ENCODE measurements at regions of chr5 and their contacts with region 1.

Region 1: GRCh38 chr5:159133041-159133741 is 33.5 kb upstream of the EBF1 start:
- DNase-seq: no peak
- ATAC-seq: peak; percentile 85
- H3K4me3 ChIP-seq: peak overlapping the region; percentile 29 to 79
- H3K27ac ChIP-seq: peak overlapping the region; percentile 3 to 74
- H3K4me1 ChIP-seq: no peaks in the 10 kb centered on the region
- H3K27me3 ChIP-seq: no peaks in the 10 kb centered on the region

Region 2: DNA sequence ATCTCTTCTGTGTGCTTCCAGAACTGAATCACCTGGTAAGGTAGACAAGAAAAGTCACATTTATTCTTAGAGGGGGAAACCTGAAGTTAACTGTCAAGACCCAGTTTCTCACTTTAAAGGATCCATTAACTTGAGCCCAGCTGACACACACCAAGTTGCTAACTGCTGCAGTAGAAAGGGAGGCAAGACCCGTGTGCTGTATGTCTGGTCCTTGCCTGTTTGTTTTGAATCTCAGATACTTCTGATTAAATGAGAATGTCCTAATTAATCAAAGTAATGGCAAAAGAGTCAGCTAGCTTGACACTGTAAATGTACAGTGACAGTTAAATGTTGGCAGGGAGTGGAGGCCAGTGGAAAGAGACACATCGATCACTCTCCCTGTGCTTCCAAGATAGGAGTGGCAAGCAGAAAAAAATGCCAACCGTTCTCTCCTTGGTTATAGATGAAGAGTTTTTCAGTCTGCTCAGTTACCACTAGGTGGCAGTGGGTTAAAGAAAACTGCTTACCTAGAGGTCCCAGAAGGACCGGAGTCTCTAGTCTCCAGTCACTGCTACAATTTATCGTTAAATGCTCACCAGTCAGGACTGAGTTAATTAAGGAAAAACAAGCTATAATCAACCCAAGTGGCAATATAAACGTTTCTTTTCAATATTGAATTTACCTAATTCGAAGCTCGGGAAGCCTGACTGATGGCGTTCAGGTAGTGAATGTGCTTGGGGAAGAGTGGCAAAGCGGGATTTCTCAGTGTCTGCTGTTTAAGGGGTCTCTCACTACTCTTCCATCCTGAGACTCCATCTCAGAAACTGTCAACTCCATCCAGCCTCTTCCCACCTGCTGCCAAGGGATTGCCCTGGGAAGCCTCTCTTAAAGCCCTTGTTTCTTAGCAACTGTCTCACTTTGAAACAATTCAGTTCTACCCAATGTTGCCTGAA is 1371.2 kb before region 1 on chr5:
- intact Hi-C with region 1: loop called in 1 of 2 experiments (anchors 10 kb)
- DNase-seq: no peak
- ATAC-seq: peak; percentile 79
- H3K4me3 ChIP-seq: no peak overlapping the region
- H3K27ac ChIP-seq: no peak overlapping the region
- H3K4me1 ChIP-seq: no peaks in the 10 kb centered on the region
- H3K27me3 ChIP-seq: no peaks in the 10 kb centered on the region

Region 3: DNA sequence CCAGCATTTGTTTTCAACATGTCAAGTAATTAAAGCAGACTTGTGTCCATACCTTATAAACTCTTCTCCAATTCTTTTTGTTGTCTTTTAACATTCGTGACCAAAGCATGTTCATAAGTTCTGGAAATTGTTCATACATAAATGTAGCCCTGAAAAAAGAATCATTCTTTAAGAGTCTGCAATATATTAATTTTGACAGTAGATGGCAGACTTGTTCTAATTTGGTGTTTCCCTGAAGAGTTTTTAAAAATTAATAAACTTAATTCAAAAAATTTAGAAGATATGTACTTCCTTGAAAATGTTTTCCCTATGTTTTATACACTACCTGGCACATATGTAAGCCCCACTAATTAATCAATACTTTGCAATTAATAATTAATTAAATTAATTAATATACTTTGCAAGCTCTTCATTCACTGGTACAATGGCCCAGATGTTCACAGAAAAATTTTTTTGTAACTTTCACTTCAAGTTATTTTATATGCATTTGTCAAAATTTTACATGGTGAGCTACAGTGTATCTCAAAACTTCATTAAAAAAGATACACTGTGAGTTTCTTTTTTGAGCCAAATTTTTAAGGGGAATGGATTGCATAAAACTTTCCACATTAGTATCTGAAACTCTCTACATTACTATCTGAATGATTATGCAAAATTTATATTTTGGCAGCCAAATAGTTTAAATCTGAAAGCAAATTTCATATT is 1316.4 kb before region 1 on chr5:
- intact Hi-C with region 1: loop called (anchors 5 kb)
- DNase-seq: no peak
- ATAC-seq: no peak
- H3K4me3 ChIP-seq: no peak overlapping the region
- H3K27ac ChIP-seq: no peak overlapping the region
- H3K4me1 ChIP-seq: peaks cover 1 to 3% of the 10 kb centered on the region in 2 donors
- H3K27me3 ChIP-seq: no peaks in the 10 kb centered on the region

Region 4: DNA sequence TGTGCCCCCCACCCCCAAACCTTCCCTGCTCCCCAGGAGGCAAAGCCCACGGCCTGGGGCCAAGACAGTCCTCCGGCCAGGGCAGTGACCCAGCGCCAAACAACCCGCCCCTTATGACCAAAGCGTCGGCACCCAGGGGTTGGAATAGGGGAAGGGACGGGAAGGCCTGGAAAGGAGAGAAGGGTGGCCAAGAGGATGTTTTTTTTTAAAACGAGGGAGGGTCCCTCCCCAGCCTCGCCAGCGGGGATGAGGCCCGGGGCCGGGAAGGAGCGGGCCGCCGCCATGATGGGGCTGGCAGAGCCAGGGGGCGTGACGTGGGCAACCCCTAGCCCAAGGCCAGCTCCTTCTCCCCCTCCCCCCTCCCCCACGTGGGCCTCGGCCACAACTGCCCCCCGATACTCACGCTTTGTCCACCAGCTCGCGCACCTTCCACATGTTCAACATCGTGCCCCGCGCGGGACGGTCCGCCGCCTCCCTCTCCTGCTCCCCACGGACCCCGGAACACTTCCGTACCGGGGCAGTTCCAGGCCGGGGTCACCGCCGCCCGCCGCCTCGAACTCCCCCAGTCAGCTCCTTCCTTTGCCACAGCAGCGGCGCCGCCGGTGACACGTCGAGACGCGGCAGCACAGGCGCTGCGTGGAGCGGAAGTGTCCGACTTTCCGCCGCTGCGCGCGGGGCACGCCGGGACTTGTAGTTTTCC is 1274.5 kb before region 1 on chr5 and contains the start of gene CLINT1:
- intact Hi-C with region 1: loop called (anchors 10 kb)
- DNase-seq: peak; percentile 96 to 99
- ATAC-seq: peak; percentile 98
- H3K4me3 ChIP-seq: peak within 1 kb of the TSS; percentile 48 to 92
- H3K27ac ChIP-seq: peak within 1 kb of the TSS in 1 of 2 donors; percentile 49
- H3K4me1 ChIP-seq: no peaks in the 10 kb centered on the region
- H3K27me3 ChIP-seq: no peaks in the 10 kb centered on the region
- total RNA-seq, gene CLINT1: 57.1 to 60.9 TPM

Region 5: DNA sequence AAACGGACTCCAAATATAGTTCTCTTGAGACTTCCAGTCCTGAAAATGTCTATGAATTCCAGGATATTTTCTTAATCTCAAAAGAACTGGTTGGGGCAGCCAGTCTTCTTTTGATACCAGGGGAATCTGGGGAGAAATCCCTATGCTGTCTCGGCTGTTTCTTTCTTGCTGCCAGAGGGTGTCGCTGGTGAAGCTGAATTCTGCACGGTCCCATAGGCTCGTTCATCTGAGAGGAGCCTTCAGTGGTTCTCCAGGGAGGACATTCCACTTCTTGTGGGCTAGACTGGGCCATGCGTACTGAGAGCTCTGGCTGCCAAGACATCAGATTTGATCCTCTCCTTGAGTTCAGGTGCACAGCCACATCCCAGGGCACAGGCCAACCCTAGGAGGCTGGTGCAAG is 1119.3 kb before region 1 on chr5:
- intact Hi-C with region 1: loop called in 1 of 2 experiments (anchors 10 kb)
- DNase-seq: peak in 1 of 2 donors; percentile 51
- ATAC-seq: no peak
- H3K4me3 ChIP-seq: no peak overlapping the region
- H3K27ac ChIP-seq: no peak overlapping the region
- H3K4me1 ChIP-seq: no peaks in the 10 kb centered on the region
- H3K27me3 ChIP-seq: no peaks in the 10 kb centered on the region

Region 6: GRCh38 chr5:158074992-158075769 is 1058.0 kb before region 1 on chr5:
- intact Hi-C with region 1: loop called (anchors 5 to 10 kb)
- DNase-seq: peak; percentile 62 to 75
- ATAC-seq: peak; percentile 90
- H3K4me3 ChIP-seq: peak overlapping the region; percentile 41 to 47
- H3K27ac ChIP-seq: no peak overlapping the region
- H3K4me1 ChIP-seq: no peaks in the 10 kb centered on the region
- H3K27me3 ChIP-seq: no peaks in the 10 kb centered on the region

Region 7: DNA sequence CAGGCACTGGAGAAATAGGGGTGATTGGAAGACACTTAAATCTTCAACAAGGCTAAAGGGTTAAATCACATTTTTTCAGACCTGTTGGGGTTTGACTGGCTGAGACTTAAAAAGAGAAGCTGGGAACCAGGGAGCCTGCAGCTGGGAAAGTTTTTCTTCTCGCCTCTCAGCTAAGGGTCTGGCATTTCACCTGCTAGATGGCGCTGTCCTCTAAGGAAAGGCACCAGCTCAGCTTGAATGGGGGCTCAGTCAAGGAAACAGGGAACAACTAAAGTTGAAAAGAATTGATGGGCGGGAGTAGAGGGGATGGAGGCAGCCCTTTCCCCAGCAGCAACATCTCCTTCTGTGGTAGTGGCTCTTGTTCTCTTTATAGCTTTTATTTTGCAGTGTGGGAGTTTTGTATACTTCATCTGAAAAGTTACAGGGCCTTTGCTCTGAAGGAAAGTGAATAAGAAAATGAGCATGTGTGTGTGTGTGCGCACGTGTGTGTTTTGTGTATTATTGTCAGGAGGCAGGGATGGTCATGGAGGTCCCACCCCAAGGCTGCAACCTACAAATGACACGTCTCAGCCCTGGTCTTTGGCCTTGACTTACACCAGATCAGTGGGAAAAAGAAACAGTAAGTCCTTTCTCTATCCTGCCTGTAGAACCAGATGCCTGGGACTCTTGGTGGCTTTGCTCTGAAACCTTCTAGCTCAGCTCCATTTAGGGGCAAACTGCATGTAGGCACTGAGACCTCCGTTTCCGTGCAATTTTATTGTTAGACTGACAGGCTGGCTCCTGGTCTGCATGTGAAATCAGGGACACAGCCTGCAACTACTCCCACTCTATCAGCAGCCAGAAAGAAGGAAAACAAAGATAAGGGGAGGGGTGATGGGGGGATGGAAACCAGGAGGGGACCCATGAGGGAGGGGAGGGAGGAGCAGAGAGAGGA is 958.0 kb before region 1 on chr5:
- intact Hi-C with region 1: loop called (anchors 5 kb)
- DNase-seq: peak; percentile 81 to 85
- ATAC-seq: peak; percentile 87
- H3K4me3 ChIP-seq: no peak overlapping the region
- H3K27ac ChIP-seq: no peak overlapping the region
- H3K4me1 ChIP-seq: no peaks in the 10 kb centered on the region
- H3K27me3 ChIP-seq: no peaks in the 10 kb centered on the region

Region 8: DNA sequence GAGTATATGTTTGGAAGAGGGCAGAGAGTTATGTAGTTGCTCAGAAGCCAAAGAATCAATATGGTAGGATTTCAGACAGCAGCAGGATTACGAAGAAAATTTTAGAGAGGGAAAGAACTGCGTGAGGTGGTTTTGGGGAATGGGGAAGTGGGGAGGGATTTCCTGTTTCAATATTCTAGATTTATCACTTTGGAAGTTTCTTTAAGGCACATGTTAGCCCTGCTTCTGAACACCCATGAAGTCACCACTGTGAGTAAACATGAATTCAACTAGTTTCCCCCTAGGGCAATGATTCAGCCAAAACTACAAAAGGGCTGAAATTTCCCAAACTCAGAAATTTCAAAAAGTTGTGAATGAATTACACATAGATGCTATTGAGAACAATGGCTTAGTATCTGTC is 165.7 kb before region 1 on chr5:
- intact Hi-C with region 1: no loop called
- DNase-seq: no peak
- ATAC-seq: no peak
- H3K4me3 ChIP-seq: no peak overlapping the region
- H3K27ac ChIP-seq: no peak overlapping the region
- H3K4me1 ChIP-seq: peaks cover 2 to 9% of the 10 kb centered on the region in 2 donors
- H3K27me3 ChIP-seq: no peaks in the 10 kb centered on the region

Region 9: DNA sequence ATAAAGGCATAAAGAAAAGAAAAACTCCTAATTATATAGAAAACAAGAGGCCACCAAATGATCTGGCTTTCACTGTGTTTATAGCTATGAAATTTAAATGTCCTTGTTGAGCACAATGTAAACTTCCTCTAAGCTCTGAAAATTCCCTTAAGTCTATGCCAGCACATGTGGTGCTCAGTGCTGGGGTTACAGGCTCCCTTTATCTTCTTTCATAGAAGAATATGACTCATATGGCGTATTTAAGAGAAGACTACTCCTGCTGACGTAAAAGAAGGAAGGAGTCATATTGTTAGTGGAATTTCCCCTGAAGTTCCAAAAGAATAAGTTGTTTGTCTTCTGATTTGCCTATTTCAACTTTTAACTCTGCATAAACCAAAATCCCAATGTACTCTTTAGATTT is 45.8 kb after region 1 on chr5:
- intact Hi-C with region 1: no loop called
- DNase-seq: no peak
- ATAC-seq: peak; percentile 79
- H3K4me3 ChIP-seq: no peak overlapping the region
- H3K27ac ChIP-seq: no peak overlapping the region
- H3K4me1 ChIP-seq: peaks cover 2 to 5% of the 10 kb centered on the region in 2 donors
- H3K27me3 ChIP-seq: no peaks in the 10 kb centered on the region

Region 10: GRCh38 chr5:160082614-160083500 is 949.7 kb after region 1 on chr5:
- intact Hi-C with region 1: no loop called
- DNase-seq: no peak
- ATAC-seq: peak; percentile 40
- H3K4me3 ChIP-seq: peak overlapping the region in 1 of 2 donors; percentile 20
- H3K27ac ChIP-seq: peak overlapping the region in 1 of 2 donors; percentile 74
- H3K4me1 ChIP-seq: peaks cover 7 to 14% of the 10 kb centered on the region in 2 donors
- H3K27me3 ChIP-seq: no peaks in the 10 kb centered on the region

Measured in aorta (tissue), 5 donors.